Colonic mucosa (tissue), 4 donors: ENCODE measurements at regions of chr5 and their contacts with region 1.

Region 1: GRCh38 chr5:14644623-14645237 is 19.8 kb upstream of the OTULIN start:
- DNase-seq: no peak
- H3K4me3 ChIP-seq: no peak overlapping the region
- H3K27ac ChIP-seq: no peak overlapping the region
- H3K4me1 ChIP-seq: no peaks in the 10 kb centered on the region
- H3K27me3 ChIP-seq: no peaks in the 10 kb centered on the region
- CTCF ChIP-seq: no peak

Region 2: GRCh38 chr5:13987843-13988464 is 656.8 kb before region 1 on chr5:
- intact Hi-C with region 1: loop called (anchors 10 kb)
- DNase-seq: peak; percentile 42
- H3K4me3 ChIP-seq: no peak overlapping the region
- H3K27ac ChIP-seq: no peak overlapping the region
- H3K4me1 ChIP-seq: no peaks in the 10 kb centered on the region
- H3K27me3 ChIP-seq: no peaks in the 10 kb centered on the region
- CTCF ChIP-seq: peak; percentile 85

Region 3: DNA sequence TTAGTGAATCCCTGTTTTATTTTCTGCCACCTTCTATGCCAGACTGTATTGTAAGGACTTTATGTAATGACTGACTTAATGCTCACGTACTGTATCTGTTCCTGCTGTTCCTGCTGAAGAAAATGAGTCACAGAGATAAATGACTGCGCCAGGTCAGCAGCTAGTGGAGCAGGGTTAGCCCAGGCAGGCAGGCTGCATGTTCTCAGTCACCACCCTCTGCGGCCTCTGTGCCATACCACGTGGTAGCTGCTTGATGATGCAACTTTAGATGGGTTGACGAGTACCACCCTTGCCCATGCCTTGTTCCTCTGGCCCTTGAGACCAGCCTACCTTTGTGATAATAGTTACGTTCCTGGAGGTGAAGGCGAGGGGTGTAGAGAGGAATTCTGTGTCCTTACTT is 339.7 kb before region 1 on chr5:
- intact Hi-C with region 1: no loop called
- DNase-seq: no peak
- H3K4me3 ChIP-seq: no peak overlapping the region
- H3K27ac ChIP-seq: no peak overlapping the region
- H3K4me1 ChIP-seq: no peaks in the 10 kb centered on the region
- H3K27me3 ChIP-seq: no peaks in the 10 kb centered on the region
- CTCF ChIP-seq: no peak

Region 4: GRCh38 chr5:14399054-14399692 is 245.6 kb before region 1 on chr5:
- intact Hi-C with region 1: loop called (anchors 5 kb)
- DNase-seq: peak; percentile 39
- H3K4me3 ChIP-seq: no peak overlapping the region
- H3K27ac ChIP-seq: no peak overlapping the region
- H3K4me1 ChIP-seq: no peaks in the 10 kb centered on the region
- H3K27me3 ChIP-seq: no peaks in the 10 kb centered on the region
- CTCF ChIP-seq: peak; percentile 59

Region 5: DNA sequence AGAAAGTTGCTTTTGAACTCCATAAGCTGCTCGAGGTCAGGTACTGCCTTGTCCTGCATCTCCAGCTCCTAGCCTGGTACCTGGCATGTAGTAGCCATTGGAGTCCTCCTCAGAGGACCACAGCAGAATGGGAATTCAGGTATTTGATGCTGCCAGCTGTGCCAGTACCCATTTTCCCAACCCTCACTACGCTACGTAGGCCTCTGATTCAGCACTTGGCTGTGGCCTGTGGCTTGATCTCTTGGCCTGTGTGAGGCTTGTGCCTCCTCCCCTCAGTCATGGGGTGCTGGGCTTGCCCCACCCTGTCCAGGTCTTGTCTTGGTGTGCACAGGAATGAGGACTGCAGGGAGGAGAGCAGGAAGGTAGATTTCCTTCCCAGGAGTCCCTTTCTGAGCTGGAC is 31.6 kb after region 1 on chr5:
- intact Hi-C with region 1: no loop called
- DNase-seq: no peak
- H3K4me3 ChIP-seq: no peak overlapping the region
- H3K27ac ChIP-seq: no peak overlapping the region
- H3K4me1 ChIP-seq: peaks cover 6% of the 10 kb centered on the region
- H3K27me3 ChIP-seq: no peaks in the 10 kb centered on the region
- CTCF ChIP-seq: no peak